Testis (tissue), 5 donors: ENCODE measurements at regions of chr6 and their contacts with region 1.

Region 1: DNA sequence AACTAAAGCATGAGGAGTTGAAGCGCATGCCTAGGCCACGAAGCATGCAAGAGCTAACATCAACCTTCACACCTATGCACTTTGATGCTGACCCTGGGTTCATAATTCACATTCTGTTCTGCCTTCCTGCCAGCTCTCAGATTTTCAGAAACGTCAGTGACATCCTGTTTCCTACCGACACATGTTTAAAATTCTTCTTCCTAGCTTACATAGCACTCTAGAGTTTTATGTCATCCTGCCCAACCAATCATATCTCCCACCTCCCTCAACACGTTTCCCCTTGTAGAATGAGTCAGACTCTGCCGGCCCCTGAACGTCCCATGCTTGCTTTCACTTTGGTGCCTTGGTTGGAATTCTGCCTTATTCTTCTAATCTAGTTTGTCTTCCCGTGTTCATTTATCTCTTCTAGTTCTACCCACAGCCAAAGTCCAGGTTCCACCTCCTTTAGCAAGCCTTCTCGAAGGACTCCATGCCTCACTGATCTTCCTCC is 97.2 kb upstream of the MAP7 start:
- DNase-seq: no peak
- H3K4me3 ChIP-seq: no peak overlapping the region
- H3K27ac ChIP-seq: peak overlapping the region; percentile 38 to 63
- H3K4me1 ChIP-seq: peaks cover 38% of the 10 kb centered on the region
- H3K27me3 ChIP-seq: no peaks in the 10 kb centered on the region
- CTCF ChIP-seq: no peak
- POLR2A ChIP-seq: no peak

Region 2: DNA sequence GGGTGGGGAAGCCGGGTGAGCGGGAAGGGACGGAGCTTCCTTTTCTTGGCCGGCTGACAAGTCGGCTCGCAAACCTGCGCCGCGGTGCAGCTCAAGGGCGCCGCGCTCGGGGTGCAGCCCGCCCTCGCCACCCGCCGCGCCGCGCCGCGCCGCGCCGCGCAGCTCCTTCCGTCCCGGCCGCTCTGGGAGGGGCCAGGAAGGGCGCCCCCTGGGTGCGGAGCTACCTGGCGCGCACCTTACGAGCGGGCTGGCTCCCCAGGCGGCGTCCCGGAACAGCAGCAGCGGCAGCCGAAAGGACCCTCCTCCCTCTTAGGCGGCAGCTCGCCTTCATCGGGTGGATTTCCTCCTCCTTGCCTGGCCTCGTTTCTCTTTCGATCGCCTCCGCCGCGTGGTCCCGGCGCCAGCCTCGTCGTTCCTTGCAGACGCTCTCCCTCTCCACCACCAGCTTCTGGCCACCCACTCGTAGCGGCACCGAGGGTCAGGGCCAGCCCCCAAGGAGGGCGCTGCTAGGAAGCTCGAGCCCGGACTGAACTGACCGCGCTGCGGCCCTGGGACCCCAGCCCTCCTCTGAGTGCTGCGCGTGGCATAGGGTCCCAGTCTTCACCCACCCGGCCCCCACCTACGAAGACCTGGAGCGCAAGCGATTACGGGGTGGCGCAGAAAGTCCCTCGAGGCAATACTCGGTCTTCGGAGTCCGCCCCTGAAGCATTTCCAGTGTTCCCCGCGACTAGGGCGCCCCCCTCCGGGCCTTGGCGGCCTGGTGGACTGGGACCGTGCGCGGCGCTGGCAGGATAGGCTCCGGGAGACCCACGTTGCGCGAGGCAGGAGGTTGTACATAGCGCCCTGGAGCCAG is 145.2 kb after region 1 on chr6 and contains the start of gene MAP3K5:
- intact Hi-C with region 1: loop called (anchors 5 kb)
- DNase-seq: peak; percentile 95
- H3K4me3 ChIP-seq: peak within 1 kb of the TSS; percentile 89 to 94
- H3K27ac ChIP-seq: peak within 1 kb of the TSS; percentile 96 to 99
- H3K4me1 ChIP-seq: peaks cover 16% of the 10 kb centered on the region
- H3K27me3 ChIP-seq: no peaks in the 10 kb centered on the region
- CTCF ChIP-seq: peak; percentile 56 to 85 (median 74)
- POLR2A ChIP-seq: no peak
- total RNA-seq, gene MAP3K5: 46.1 to 55.3 TPM